Posterior cingulate gyrus (tissue), 11 donors: ENCODE measurements at regions of chrX and their contacts with region 1.

Region 1: DNA sequence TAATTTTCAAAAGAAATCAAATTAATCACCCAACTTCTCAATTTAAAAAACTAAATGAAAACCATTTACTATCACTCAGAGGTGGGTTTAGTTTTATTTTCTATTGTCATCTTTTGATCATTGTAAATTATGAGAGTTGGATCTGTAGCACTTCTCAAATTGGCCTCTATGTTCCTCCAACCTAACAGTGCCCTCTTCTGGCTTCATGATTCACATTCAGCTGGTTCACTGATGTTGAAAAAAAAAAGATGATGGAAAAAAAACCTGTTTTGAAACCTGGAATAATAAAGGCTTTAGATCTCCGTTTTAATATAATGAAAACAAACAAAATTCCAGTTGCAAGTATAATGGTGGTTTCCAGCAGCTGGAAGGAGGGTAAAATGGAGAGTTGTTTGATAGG is 2.4 kb upstream of the NBDY start:
- DNase-seq: peak in 1 of 10 donors; percentile 7

Region 2: GRCh38 chrX:56281789-56282188 is 444.8 kb before region 1 on chrX:
- intact Hi-C with region 1: loop called (anchors 2 kb)
- DNase-seq: no peak

Region 3: DNA sequence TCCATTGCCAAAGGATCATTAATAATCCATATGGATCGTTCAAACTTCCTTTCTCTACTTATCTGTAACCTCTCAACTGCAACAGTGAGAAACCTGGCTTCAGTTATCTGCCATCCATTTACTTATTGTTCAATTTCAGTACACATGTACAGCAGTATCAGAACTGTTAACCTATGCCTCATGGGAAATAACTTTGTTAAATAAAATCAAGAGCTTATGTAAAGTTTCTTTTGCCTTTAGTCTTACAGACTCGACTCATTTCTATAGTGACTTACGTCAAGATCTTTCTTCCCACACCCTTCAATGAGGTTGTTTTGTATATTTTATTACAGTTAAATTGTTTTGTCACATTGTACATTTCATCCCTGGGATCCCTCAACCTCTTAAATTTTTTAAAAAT is 151.7 kb before region 1 on chrX:
- intact Hi-C with region 1: no loop called
- DNase-seq: no peak

Region 4: DNA sequence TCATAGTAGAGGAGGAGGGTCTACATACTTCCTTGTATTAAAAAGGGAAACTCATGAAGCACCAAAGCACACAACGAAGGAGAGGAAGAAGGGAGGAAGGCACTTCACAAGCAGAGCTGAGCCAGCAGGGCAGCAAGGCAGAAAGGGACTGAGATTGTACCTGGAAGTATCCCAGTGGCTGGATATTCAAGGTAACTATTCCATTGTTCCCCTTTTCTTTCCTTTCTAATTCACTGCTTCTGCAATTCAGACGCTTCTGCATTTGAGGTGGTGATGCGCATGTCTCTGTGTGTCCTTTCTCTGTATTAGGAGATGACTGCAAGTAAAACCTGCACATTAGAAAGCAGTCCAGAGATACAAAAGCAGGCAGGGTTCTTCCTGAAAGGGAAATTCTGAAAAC is 108.3 kb before region 1 on chrX:
- intact Hi-C with region 1: no loop called
- DNase-seq: no peak